HCT116 (cell line): ENCODE measurements at regions of chr17 and their contacts with region 1.

Region 1: DNA sequence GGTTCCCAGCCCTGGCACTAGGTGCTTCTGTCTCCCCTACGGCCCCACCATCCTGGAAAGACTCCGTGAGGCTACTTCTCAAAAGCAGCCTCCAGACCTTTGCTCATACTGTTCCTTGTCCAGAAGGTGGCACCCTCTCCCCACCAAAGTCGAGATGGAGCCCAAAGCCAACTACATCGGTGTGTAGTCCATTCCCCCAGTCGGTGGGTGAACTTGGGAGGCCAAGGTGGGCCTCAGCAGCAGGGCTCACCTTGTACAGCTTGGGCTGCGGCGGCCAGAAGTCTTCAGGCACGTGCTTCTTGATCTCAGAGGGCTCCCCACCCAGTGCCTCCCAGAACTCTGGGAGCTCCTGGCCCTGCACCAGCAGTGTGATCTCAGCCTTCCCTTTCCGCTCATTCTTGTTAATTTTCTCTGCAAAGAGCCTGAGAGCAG is 10.2 kb downstream of the FLII start:
- DNase-seq: no peak
- ATAC-seq: peak; percentile 69
- H3K4me3 ChIP-seq: no peak overlapping the region
- H3K27ac ChIP-seq: peak overlapping the region; percentile 19; the same call in 1 of the 2 replicates
- H3K4me1 ChIP-seq: peaks cover 0 to 12% of the 10 kb centered on the region in 2 experiments; a peak in 2 of 4 replicates
- H3K27me3 ChIP-seq: no peaks in the 10 kb centered on the region
- CTCF ChIP-seq: peak; percentile 63 to 76 (median 72); a peak in 5 of 6 replicates
- POLR2A ChIP-seq: no peak
- RAD21 ChIP-seq: peak; percentile 88

Region 2: GRCh38 chr17:18321309-18321708 is 73.0 kb after region 1 on chr17:
- CTCF ChIA-PET with region 1: interaction called, 5 read pairs
- POLR2A ChIA-PET with region 1: no interaction called
- RAD21 ChIA-PET with region 1: no interaction called
- intact Hi-C with region 1: loop called (anchors 1 kb)
- DNase-seq: peak; percentile 16
- ATAC-seq: peak; percentile 82
- H3K4me3 ChIP-seq: no peak overlapping the region
- H3K27ac ChIP-seq: no peak overlapping the region
- H3K4me1 ChIP-seq: no peaks in the 10 kb centered on the region
- H3K27me3 ChIP-seq: no peaks in the 10 kb centered on the region
- CTCF ChIP-seq: peak; percentile 34 to 48 (median 46); a peak in 5 of 6 replicates
- POLR2A ChIP-seq: no peak
- RAD21 ChIP-seq: peak; percentile 44; the same call in 1 of the 2 replicates